B cell (primary cell): ENCODE measurements at regions of chr10 and their contacts with region 1.

Region 1: DNA sequence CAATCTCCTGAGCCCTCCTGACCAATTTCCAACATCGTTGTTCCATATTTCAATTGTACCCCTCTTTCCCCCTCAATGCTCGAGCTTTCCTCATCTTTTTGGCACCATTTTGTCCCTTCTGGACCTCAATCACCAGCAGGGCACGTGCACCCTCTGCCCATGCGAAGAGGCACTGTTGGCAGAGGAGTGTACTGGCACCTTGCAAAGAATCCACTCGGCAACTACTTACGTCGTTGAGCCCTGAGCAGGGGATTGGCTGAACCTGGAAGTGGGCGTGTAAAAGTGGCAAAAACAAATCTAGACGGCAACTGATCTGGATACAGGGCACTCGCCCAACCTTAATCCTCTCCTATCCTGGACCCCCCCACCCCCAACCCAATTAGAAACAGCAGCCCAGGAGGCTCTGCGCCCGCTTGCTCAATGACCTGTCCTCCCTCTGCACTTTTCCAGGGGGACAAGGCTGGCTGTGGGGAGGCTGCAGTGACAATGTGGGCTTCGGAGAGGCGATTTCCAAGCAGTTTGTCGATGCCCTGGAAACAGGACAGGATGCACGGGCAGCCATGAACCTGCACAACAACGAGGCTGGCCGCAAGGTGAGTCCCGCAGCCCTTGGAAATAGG is 18.8 kb downstream of the WNT8B start:
- DNase-seq: peak; percentile 95
- ATAC-seq: peak; percentile 99
- H3K4me3 ChIP-seq: peak overlapping the region; percentile 57 to 81 (median 64)
- H3K4me3 Mint-ChIP-seq: peak overlapping the region; percentile 85
- H3K27ac ChIP-seq: no peak overlapping the region
- H3K27ac Mint-ChIP-seq: no peak overlapping the region
- H3K4me1 ChIP-seq: peaks cover 7 to 20% of the 10 kb centered on the region in 2 donors
- H3K4me1 Mint-ChIP-seq: peaks cover 14% of the 10 kb centered on the region
- H3K27me3 ChIP-seq: peaks cover 0 to 32% (median 20%) of the 10 kb centered on the region in 4 experiments
- H3K27me3 Mint-ChIP-seq: peaks cover 31% of the 10 kb centered on the region
- CTCF ChIP-seq: no peak

Region 2: DNA sequence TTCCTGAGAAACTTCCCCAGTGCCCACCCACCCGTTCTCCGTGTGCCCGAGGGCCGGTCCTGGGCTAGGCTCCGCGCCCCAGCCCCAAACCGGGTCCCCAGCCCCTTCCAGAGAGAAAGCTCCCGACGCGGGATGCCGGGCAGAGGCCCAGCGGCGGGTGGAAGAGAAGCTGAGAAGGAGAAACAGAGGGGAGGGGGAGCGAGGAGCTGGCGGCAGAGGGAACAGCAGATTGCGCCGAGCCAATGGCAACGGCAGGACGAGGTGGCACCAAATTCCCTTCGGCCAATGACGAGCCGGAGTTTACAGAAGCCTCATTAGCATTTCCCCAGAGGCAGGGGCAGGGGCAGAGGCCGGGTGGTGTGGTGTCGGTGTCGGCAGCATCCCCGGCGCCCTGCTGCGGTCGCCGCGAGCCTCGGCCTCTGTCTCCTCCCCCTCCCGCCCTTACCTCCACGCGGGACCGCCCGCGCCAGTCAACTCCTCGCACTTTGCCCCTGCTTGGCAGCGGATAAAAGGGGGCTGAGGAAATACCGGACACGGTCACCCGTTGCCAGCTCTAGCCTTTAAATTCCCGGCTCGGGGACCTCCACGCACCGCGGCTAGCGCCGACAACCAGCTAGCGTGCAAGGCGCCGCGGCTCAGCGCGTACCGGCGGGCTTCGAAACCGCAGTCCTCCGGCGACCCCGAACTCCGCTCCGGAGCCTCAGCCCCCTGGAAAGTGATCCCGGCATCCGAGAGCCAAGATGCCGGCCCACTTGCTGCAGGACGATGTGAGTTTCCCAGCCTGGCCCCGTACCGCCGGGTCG is 134.6 kb before region 1 on chr10 and contains the start of gene SCD:
- CTCF ChIA-PET with region 1: interaction called, 3 read pairs
- POLR2A ChIA-PET with region 1: no interaction called
- intact Hi-C with region 1: loop called (anchors 1 kb)
- DNase-seq: peak; percentile 92
- ATAC-seq: peak; percentile 95
- H3K4me3 ChIP-seq: peak within 1 kb of the TSS; percentile 62 to 74 (median 72)
- H3K4me3 Mint-ChIP-seq: peak within 1 kb of the TSS; percentile 91
- H3K27ac ChIP-seq: peak within 1 kb of the TSS; percentile 64 to 85
- H3K27ac Mint-ChIP-seq: peak within 1 kb of the TSS; percentile 78
- H3K4me1 ChIP-seq: peaks cover 14 to 23% of the 10 kb centered on the region in 2 donors
- H3K4me1 Mint-ChIP-seq: peaks cover 22% of the 10 kb centered on the region
- H3K27me3 ChIP-seq: peaks cover 0 to 8% (median 0%) of the 10 kb centered on the region in 4 experiments
- H3K27me3 Mint-ChIP-seq: no peaks in the 10 kb centered on the region
- CTCF ChIP-seq: no peak
- total RNA-seq, gene SCD: 5.1 and 5.6 TPM in 2 replicates

Region 3: DNA sequence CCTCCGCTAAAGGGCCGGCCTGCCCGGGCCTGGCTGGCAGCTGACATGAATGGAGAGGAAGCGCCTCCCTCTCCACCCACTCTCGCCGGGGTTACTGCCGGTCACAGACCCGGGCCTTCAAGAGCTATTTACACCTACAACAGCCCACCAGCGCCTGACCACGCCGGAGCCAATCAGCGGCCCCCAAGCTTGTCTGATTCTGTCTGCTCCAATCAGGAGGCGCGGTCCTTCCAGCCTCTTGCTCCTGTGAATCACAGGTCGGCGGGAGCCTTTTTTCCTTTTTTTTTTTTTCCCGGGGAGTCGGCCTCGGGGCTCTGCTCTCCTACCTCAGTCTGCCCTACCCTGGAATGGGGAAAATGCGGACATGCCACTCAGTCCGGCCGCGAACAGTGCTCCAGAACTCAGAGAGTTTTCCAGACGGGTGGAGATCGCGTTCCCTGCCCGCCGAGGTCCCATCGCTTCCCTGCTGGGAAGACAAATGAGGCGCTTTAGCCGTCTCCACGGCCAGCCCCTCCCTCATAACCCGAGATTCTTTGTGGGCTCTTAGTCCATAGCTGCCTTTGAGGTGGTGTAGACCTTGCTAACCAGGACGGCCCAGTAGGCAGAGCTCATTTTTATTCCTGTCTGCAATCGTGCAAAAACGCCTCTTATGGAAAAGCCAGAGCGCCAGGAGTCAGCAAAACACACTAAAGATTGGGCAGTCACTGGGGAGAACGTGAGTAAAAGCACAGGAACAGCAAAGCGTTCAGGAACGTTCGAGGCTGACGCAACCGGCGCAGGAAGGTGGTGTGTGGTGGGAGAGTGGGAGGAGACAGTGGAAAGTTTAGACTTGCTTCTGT is 108.1 kb before region 1 on chr10:
- CTCF ChIA-PET with region 1: no interaction called
- POLR2A ChIA-PET with region 1: no interaction called
- intact Hi-C with region 1: loop called (anchors 5 kb)
- DNase-seq: peak; percentile 87
- ATAC-seq: peak; percentile 97
- H3K4me3 ChIP-seq: peak overlapping the region; percentile 57 to 82 (median 81)
- H3K4me3 Mint-ChIP-seq: no peak overlapping the region
- H3K27ac ChIP-seq: peak overlapping the region; percentile 83 to 91
- H3K27ac Mint-ChIP-seq: no peak overlapping the region
- H3K4me1 ChIP-seq: peaks cover 32 to 52% of the 10 kb centered on the region in 2 donors
- H3K4me1 Mint-ChIP-seq: peaks cover 26% of the 10 kb centered on the region
- H3K27me3 ChIP-seq: peaks cover 0 to 2% (median 0%) of the 10 kb centered on the region in 4 experiments
- H3K27me3 Mint-ChIP-seq: no peaks in the 10 kb centered on the region
- CTCF ChIP-seq: no peak

Region 4: DNA sequence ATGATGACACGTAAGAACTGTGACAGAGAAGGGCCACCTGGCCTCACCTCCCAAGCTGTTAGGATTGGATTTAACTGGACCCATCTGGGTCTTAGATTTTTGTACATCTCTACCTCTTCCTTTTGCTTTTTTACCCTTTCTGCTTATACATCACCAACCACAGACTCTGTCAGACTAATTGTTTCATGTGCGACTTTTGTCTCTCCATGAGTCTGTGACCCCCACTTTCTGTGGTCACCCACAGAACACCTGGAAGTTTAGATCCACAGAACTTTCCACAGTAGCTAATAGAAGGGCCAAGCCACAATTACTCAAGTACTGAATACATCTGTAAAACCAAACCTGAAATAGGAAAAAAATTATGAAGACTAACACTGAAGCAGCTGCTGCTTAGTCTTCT is 15.0 kb after region 1 on chr10:
- CTCF ChIA-PET with region 1: interaction called, 16 read pairs
- POLR2A ChIA-PET with region 1: no interaction called
- intact Hi-C with region 1: no loop called
- DNase-seq: no peak
- ATAC-seq: no peak
- H3K4me3 ChIP-seq: no peak overlapping the region
- H3K4me3 Mint-ChIP-seq: no peak overlapping the region
- H3K27ac ChIP-seq: no peak overlapping the region
- H3K27ac Mint-ChIP-seq: no peak overlapping the region
- H3K4me1 ChIP-seq: no peaks in the 10 kb centered on the region
- H3K4me1 Mint-ChIP-seq: no peaks in the 10 kb centered on the region
- H3K27me3 ChIP-seq: no peaks in the 10 kb centered on the region
- H3K27me3 Mint-ChIP-seq: no peaks in the 10 kb centered on the region
- CTCF ChIP-seq: no peak